ENCODE measurements at regions of chr12 and their contacts with region 1.

Region 1: DNA sequence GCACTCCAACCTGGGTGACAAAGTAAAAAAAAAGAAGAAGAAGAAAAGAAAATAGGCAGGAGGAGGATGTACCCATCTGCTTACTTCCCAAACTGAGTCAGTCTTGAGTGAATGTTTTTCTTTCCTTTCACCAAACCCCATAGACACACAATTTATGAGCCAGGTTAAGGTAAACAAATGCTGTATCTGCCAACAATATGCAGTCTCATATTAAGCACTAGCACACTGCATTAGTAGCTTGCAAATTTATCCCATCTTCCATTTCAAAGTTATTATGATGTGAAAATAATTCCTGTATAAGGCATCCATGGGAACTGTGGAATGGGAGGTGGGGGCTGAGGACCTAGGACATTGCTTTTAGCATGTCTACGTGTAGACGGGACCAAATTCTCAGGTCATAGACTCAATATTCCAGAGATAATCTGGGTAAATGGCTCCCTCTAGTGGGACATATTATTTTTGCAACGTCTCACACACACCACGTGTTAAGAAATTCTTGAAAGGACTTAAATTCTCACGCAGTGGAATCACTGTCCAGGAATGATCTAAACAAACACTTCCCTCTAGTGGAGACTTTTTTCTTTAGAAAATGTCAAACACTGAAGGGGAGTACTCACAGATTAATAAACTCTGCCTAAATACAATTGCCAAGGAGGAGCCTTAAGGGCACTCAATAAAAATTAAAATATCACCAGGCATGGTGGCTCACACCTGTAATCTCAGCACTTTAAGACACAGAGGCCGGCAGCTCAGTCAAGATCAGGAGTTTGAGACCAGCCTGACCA is 17.1 kb upstream of the OR10P1 start:
- DNase-seq: no peak
- ATAC-seq: peak; percentile 96

Region 2: DNA sequence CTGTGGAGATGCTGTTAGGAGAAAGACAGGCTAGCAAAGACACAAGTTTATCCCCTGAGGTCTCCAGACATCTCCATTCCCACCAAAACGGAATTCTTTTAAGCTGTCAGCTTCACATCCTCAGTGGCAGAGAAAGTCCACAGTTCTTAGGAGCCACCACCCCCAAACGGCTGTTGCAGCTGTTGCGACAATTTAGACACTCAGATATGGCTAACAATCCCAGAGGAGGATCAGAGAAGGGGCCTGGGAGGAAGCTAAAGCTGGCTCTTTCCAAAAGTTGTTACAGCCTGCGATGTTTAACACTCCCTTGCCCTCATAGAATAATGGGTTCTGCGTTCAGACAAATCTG is 1941.8 kb before region 1 on chr12:
- intact Hi-C with region 1: no loop called
- DNase-seq: no peak
- ATAC-seq: no peak

Region 3: GRCh38 chr12:55188974-55189556 is 430.5 kb before region 1 on chr12:
- intact Hi-C with region 1: loop called (anchors 10 kb)
- DNase-seq: no peak
- ATAC-seq: no peak

Region 4: DNA sequence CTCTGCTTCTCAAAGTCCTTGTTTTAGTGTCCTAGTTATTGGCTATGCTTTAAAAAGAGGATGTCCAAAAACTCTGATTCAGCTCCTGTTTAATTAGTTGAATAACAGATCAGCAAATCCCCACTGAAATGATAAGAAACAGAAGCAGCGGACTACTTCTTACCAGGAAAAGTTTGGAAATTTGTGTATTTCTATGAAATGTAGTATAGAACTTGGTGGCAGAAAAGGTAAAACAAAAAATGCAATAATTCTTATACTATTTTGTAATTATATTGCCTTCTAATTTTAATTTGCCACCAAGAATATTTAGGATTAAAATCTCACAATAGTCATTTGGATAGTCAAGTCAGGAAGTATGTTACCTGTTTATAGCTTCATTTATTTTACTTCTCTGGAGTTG is 47.4 kb before region 1 on chr12 and contains the start of gene OR2AP1:
- intact Hi-C with region 1: no loop called
- DNase-seq: no peak
- ATAC-seq: no peak
- total RNA-seq, gene OR2AP1: not detected

Region 5: GRCh38 chr12:55687746-55688145 is 68.2 kb after region 1 on chr12:
- intact Hi-C with region 1: no loop called
- DNase-seq: peak; percentile 44
- ATAC-seq: no peak

Region 6: GRCh38 chr12:55940065-55940732 is 320.7 kb after region 1 on chr12:
- intact Hi-C with region 1: no loop called
- DNase-seq: peak; percentile 92
- ATAC-seq: peak; percentile 94

Measured in sciatic nerve (tissue), 2 donors.